ENCODE measurements at regions of chr16 and their contacts with region 1.

Region 1: DNA sequence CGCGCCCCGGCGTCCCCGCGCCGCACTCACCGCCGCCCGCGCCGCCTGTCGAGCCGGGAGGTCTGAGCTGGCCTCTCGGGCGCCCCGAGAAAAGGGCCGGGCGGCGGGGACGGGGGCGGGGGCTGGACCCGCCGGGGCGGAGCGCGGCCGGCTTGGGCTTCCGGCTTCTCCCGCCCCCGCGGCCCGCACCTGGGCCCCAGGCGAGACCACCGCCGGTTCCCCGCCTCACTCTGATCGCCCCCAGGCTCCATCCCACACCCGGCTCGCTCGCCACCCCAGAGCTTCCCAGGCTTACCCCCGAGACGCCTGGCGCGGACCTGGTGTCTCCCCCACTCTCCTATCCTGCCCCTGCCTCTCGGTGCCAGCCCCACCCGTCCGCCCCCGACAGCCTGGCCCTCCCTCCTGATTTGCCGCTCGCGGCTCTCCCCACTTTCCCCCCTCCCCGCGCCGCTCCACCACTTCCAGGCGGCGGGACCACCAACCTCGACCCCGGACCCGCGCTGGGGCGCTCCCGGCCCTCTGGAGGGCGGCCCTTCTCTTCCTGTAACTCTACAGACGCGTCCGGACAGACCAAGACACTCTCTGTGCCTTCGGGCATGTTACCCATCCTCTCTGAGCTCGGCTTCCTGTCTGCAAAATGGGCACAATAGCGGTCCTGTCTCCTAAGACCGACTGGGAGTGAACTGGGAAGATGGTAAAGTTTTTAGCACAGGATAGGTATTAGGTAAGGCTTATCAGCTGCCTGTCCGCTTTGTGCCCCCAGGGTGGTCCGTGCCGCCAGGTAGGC is at the start of gene LITAF:
- DNase-seq: peak; percentile 72 to 80 (median 74)
- H3K4me3 ChIP-seq: peak within 1 kb of the TSS; percentile 86
- H3K27ac ChIP-seq: peak within 1 kb of the TSS; percentile 88
- H3K4me1 ChIP-seq: peaks cover 3% of the 10 kb centered on the region
- H3K27me3 ChIP-seq: no peaks in the 10 kb centered on the region
- CTCF ChIP-seq: no peak
- EP300 ChIP-seq: no peak
- POLR2A ChIP-seq: peak; percentile 69
- total RNA-seq, gene LITAF: 39.7 to 169 (median 105) TPM

Region 2: DNA sequence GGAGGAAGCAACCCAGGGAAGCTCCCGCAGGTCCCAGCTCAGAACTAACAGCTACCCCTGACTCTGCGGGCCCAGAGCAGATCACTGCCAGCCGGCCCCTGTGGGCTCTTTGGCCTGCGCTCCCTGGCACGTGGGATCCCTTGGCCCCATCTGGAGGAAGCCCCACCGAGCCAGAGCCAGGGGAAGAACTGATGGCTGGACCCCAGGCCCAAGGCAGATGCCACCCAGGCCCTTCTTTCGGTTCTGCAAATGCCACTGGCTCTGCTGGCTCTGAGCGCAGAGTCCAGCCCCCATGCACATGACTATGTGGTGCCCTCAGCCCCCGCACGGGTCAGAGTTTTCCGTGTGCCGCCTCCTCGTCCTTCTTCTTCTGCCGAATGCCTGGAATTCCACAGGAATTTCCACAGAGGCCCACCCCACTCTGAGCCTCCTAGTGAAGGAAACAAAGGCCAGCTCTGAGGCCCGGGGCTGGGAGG is 45.5 kb after region 1 on chr16:
- intact Hi-C with region 1: loop called in 1 of 4 experiments (anchors 5 kb)
- DNase-seq: peak; percentile 75 to 87 (median 77)
- H3K4me3 ChIP-seq: no peak overlapping the region
- H3K27ac ChIP-seq: peak overlapping the region; percentile 65 to 74
- H3K4me1 ChIP-seq: peaks cover 13% of the 10 kb centered on the region
- H3K27me3 ChIP-seq: no peaks in the 10 kb centered on the region
- CTCF ChIP-seq: no peak
- EP300 ChIP-seq: no peak
- POLR2A ChIP-seq: no peak

Measured in ovary (tissue), 10 donors.